A673 (cell line): ENCODE measurements at regions of chr3 and their contacts with region 1.

Region 1: DNA sequence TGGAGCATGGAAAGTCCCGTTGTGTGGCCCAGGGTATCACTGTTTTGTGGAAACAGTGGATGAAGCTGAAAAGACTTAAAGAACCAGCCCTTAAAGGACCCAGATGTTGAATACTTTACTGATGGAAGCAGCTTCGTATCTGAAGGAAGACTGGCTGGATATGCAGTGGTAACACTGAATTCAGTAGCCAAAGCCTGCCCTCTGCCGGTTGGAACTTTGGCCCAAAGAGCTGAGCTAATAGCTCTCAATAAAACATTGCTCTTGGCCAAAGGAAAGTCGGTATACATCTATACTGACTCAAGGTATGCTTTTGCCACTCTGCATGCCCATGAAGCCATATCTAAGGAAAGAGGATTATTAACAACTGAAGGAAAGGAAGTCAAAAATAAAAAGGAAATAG is 885.4 kb downstream of the PDCD6IP start:
- DNase-seq: peak; percentile 88
- H3K4me3 ChIP-seq: no peak overlapping the region
- H3K27ac ChIP-seq: peak overlapping the region; percentile 71
- H3K4me1 ChIP-seq: peaks cover 18% of the 10 kb centered on the region
- H3K27me3 ChIP-seq: no peaks in the 10 kb centered on the region
- CTCF ChIP-seq: peak; percentile 71

Region 2: DNA sequence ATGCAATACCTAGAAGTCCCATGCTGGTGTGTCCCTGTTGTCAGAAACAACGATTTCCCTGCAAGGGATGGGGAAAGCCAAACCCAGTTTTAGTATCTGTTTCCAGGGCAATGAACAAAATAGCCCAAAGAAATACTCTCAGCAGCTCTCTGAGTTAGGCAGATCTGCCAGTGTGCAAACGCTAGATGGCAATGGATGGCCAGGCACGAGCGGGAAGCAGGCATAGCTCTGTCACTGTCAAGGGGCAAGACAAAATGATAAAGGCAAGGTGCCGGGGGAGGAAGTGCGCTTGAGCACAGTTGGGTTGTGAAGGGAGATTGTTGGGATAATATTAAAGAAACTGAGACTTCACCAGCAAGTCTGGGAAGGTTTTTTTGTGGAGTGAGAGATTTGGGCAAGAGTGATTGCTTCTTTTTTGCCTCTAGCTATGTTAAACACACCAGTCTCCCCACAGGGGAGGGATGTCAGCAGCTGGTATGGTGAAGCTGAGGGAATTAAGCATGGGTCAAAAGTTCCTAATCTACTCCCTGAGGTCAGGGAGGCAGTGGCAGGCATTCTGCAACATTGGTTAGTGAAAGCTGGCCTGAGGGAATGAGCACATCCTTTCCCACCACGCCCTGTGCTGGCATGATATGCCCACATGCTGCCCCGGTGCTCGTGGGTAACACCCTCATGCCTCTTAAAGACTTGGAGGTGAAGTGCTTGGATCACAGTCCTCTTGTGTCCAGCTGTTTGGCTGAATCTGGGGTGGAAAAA is 767.9 kb before region 1 on chr3:
- CTCF ChIA-PET with region 1: interaction called, 9 read pairs
- POLR2A ChIA-PET with region 1: interaction called, 3 read pairs
- intact Hi-C with region 1: loop called (anchors 5 kb)
- DNase-seq: peak; percentile 92
- H3K4me3 ChIP-seq: no peak overlapping the region
- H3K27ac ChIP-seq: peak overlapping the region; percentile 97
- H3K4me1 ChIP-seq: peaks cover 65% of the 10 kb centered on the region
- H3K27me3 ChIP-seq: no peaks in the 10 kb centered on the region
- CTCF ChIP-seq: peak; percentile 76

Region 3: DNA sequence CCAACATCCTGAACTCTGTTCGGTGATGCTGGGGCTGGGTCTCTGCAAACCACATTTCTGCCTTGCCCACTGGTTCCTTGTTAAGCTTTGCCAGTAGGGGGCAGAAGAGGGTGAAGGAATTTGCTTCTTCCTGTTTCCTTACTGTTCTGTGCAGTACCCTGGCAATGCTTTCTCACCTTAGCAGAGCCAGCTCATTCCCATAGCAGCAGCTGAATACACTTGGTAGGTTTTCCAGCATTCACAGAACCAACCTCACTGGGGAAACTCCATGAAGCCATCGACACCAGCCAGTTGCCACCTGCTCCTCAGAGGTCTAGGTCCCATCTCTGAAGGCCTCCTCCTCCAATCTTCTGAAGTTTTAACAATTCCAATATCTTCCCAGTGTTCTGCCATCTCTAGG is 577.0 kb before region 1 on chr3:
- CTCF ChIA-PET with region 1: no interaction called
- POLR2A ChIA-PET with region 1: no interaction called
- intact Hi-C with region 1: loop called (anchors 5 kb)
- DNase-seq: peak; percentile 84
- H3K4me3 ChIP-seq: no peak overlapping the region
- H3K27ac ChIP-seq: peak overlapping the region; percentile 28
- H3K4me1 ChIP-seq: peaks cover 35% of the 10 kb centered on the region
- H3K27me3 ChIP-seq: no peaks in the 10 kb centered on the region
- CTCF ChIP-seq: peak; percentile 81

Region 4: DNA sequence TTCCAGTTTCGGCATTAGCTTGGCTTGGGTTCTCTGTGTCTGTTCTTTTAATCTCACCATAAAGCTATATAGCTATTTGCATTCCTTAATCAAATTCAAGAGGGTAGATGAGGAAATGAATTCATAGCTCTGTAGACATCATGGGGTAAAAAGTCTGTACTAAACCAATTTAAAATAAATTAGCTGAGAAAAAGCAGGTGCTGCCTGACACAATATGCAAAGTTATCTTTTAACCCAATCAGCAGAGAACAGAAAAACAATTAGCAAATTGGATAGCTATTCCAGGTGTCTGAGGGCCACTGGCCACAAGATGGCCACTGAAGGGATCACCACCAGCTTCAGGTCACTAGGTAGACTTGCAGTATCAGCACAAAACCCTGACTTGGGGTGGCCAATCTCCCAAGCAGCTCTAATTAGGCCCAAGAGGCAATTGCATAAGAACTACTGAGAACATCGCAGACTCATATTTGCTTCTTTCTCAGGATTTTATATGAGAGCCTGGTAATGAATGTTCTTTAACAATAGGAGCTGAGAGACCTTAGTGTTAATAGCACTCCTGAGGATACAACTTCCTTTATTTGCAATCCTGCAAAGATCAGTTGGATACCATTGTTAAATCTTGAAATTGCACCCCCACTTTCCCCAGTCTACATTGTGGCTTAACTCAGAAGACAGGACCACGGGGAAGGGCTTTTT is 391.1 kb before region 1 on chr3:
- CTCF ChIA-PET with region 1: interaction called, 11 read pairs
- POLR2A ChIA-PET with region 1: no interaction called
- intact Hi-C with region 1: loop called (anchors 5 kb)
- DNase-seq: peak; percentile 92
- H3K4me3 ChIP-seq: no peak overlapping the region
- H3K27ac ChIP-seq: peak overlapping the region; percentile 87
- H3K4me1 ChIP-seq: peaks cover 81% of the 10 kb centered on the region
- H3K27me3 ChIP-seq: no peaks in the 10 kb centered on the region
- CTCF ChIP-seq: no peak